Motor neuron (in vitro differentiated cells): ENCODE measurements at regions of chr16 and their contacts with region 1.

Region 1: GRCh38 chr16:13935408-13935807 is 15.5 kb downstream of the ERCC4 start:
- ATAC-seq: no peak
- H3K4me3 ChIP-seq: no peak overlapping the region
- H3K27ac ChIP-seq: no peak overlapping the region
- H3K4me1 ChIP-seq: no peaks in the 10 kb centered on the region

Region 2: DNA sequence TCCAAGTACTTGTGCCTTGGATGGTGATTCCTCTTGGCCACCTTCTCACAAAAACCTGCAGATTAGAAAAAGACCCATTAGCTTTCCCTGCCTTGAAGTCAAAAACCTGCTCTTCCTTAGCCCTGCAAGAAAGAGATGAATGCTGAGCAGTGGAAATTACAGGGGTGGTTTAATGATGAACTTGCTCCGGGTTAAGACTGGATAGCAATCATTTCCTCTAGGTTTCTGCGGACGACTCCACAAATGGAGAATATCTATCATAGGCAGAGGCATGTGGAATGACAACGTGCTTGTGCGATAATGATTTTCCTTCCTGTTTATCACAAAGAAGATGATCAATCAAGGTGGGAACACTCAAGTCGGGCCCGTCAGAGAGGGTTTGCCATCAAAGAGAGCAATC is 216.7 kb before region 1 on chr16:
- in situ Hi-C with region 1: no loop called
- ATAC-seq: peak in 4 of 8 experiments; percentile 52 to 80 (median 74)
- H3K4me3 ChIP-seq: no peak overlapping the region
- H3K27ac ChIP-seq: no peak overlapping the region
- H3K4me1 ChIP-seq: peaks cover 5 to 6% of the 10 kb centered on the region in 2 donors

Region 3: GRCh38 chr16:14186007-14186794 is 250.8 kb after region 1 on chr16:
- in situ Hi-C with region 1: loop called in 1 of 9 experiments (anchors 25 kb)
- ATAC-seq: peak; percentile 80 to 87 (median 82)
- H3K4me3 ChIP-seq: peak overlapping the region; percentile 17 to 38 (median 28)
- H3K27ac ChIP-seq: peak overlapping the region; percentile 5 to 58
- H3K4me1 ChIP-seq: peaks cover 26 to 27% of the 10 kb centered on the region in 2 donors

Region 4: DNA sequence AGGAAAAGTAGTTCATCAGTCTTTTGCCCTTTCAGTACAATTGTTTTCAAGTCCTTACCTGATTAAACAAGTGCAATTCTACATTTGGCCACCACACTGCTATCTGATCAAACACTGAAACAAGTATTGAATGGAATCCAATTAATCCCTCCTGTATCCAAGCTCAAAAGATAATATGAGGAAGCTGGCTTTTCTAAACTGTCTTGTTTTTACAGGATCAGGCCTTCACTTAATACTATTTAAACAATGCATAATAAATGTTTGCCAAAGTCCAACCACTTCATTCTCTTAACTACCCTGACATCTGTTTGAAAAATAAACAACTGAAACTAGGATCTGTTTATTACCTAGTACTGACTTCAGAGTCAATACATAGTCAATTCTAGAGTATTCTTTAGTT is 267.3 kb after region 1 on chr16:
- in situ Hi-C with region 1: loop called in 2 of 9 experiments (anchors 25 kb)
- ATAC-seq: peak in 2 of 8 experiments; percentile 14 to 18
- H3K4me3 ChIP-seq: no peak overlapping the region
- H3K27ac ChIP-seq: no peak overlapping the region
- H3K4me1 ChIP-seq: no peaks in the 10 kb centered on the region

Region 5: GRCh38 chr16:14249291-14250032 is 314.1 kb after region 1 on chr16:
- in situ Hi-C with region 1: loop called in 2 of 9 experiments (anchors 25 kb)
- ATAC-seq: peak in 2 of 8 experiments; percentile 39 to 40
- H3K4me3 ChIP-seq: no peak overlapping the region
- H3K27ac ChIP-seq: no peak overlapping the region
- H3K4me1 ChIP-seq: no peaks in the 10 kb centered on the region

Region 6: GRCh38 chr16:14285513-14286385 is 350.3 kb after region 1 on chr16:
- in situ Hi-C with region 1: loop called in 1 of 9 experiments (anchors 25 kb)
- ATAC-seq: peak; percentile 83 to 94 (median 88)
- H3K4me3 ChIP-seq: peak overlapping the region; percentile 60 to 90 (median 71)
- H3K27ac ChIP-seq: peak overlapping the region; percentile 40 to 76
- H3K4me1 ChIP-seq: peaks cover 0 to 4% of the 10 kb centered on the region in 2 donors

Region 7: DNA sequence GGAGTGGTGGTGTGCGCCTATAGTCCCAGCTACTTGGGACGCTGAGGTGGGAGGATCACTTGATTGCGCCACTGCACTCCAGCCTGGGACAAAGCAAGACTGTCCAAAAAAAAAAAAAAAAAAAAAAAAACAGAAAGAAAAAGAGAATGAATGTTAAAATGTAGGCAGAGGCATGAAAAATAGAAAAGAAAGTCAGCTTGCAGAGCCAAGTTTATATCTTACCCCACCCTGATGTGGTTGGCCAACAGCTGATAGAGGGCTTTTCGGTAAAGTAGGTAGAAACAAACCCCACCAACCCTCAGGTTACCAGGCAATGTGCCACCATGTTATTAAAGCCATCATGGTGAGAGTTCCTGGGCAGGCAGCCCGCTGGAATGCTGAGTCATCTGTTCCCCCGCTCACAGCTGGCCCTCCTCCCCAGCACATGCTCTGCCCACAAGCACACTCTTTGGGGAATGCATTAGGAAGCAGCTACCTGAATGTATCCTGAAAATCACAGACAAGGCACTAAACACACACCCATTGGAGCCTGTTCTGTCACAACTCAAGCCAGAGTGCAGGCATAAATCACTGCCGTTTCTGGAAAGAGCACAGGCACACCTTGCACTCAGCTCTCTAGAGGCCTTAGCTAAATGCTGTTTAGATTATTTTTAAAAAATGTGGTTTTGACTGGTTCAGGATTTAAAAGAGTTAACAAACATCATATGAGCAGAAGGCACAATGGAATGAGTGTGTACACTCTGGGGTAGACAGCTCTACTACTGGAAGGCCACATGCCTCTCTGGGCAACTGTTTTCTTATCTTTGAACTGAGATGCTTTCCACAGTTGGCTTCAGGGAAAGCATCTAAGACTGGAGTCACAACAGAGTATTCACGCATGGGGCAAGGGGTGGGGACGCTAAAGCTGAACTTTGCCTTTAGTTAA is 566.2 kb after region 1 on chr16:
- in situ Hi-C with region 1: loop called in 1 of 9 experiments (anchors 25 kb)
- ATAC-seq: peak; percentile 74 to 89 (median 81)
- H3K4me3 ChIP-seq: no peak overlapping the region
- H3K27ac ChIP-seq: peak overlapping the region in 1 of 2 donors; percentile 18
- H3K4me1 ChIP-seq: peaks cover 8 to 17% of the 10 kb centered on the region in 2 donors

Region 8: DNA sequence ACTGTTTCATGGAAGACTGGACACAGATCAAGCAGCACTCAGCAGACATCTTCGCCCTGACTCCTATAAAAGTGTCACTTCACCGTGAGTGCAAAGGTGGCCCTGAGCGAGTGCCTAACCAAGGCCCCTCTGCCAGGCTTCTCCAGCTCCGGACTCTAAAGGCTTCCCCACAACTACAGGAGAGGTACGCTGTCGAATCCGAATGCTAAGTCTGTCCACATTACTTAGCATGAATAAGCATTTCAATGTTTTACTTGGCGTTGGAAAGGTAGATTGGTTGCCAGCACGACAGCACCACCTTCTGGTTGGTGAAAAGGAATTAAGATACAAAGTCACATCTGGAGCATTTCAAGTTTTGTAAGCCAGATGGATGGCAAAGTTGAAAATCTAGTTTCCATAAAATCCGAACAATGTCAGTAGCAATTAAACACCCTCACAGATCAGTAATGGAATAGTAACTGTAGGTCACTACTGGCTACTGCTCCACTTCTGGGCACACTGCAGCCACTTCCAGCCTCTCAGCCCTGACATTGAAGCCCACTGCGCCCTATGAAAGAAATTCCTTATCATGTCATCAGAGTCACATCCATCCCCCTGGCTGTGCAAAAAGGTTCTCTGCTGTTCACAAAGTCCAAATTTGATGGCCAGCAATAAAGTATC is 593.7 kb after region 1 on chr16:
- in situ Hi-C with region 1: loop called in 2 of 9 experiments (anchors 25 kb)
- ATAC-seq: peak; percentile 48 to 88 (median 66)
- H3K4me3 ChIP-seq: no peak overlapping the region
- H3K27ac ChIP-seq: no peak overlapping the region
- H3K4me1 ChIP-seq: peaks cover 0 to 3% of the 10 kb centered on the region in 2 donors